Breast epithelium (tissue), 4 donors: ENCODE measurements at regions of chr1 and their contacts with region 1.

Region 1: DNA sequence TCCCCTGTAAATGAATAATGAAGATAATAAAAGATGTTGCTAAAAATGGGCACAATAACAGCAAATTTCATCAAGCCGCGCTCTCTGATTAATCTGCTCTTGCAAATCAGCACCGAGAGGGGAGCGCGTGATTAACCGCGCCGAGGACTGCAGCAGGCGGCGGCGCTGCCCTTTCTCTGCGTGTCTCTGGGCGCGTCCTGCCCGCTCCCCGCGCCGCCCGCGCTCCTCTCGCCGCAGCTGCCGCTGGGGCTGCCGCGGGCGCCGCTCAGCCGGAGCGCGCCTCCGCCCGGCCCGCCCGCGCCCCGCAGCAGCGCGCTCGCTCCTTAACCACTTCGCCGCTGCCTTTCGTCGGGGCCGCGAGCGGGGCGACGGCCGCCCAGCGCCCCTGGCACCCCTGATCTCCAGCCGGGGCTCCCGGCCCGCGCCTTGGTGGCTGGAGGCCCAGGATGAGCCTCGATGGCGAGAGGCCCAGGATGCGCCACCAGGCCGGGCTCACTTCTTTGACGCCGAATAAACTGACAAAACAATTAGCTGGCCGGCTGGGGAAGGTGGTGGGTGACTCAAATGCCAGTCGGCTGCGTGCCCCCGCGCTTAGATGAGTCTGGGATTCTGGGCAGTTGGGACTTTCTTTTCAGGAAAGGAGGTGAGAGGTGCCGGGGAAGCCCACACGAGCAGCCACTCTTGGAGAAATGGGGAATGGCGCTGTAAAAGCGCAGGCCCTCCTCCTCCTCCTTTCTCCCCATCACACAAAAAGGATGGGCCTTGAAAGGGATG is 221.4 kb upstream of the PKN2 start:
- DNase-seq: no peak
- H3K4me3 ChIP-seq: peak overlapping the region; percentile 43 to 60 (median 50)
- H3K27ac ChIP-seq: no peak overlapping the region
- H3K4me1 ChIP-seq: no peaks in the 10 kb centered on the region
- H3K27me3 ChIP-seq: no peaks in the 10 kb centered on the region
- CTCF ChIP-seq: no peak
- POLR2A ChIP-seq: no peak

Region 2: GRCh38 chr1:88168126-88168525 is 294.5 kb before region 1 on chr1:
- intact Hi-C with region 1: loop called (anchors 10 kb)
- DNase-seq: no peak
- H3K4me3 ChIP-seq: no peak overlapping the region
- H3K27ac ChIP-seq: no peak overlapping the region
- H3K4me1 ChIP-seq: no peaks in the 10 kb centered on the region
- H3K27me3 ChIP-seq: peaks cover 0 to 5% of the 10 kb centered on the region in 2 donors
- CTCF ChIP-seq: no peak
- POLR2A ChIP-seq: no peak

Region 3: DNA sequence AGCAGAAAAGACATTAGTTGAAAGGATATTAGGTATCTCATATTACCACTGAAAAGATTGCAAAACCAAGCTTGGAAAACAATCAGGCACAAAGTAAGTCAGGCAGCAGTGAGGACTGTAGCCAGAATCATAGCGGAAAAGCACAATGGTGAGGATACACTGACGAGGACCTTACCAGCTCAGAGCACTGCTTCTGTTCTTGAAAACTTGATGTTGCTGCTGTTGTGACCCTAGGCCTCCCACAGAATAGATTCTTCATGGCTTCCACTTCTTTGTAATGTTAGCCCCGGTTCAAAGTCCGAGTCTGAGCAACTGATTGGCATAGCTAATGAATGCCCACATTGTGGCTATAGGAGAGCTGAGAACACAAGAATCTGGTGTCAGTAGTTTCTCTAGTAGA is 1125.1 kb after region 1 on chr1:
- intact Hi-C with region 1: no loop called
- DNase-seq: no peak
- H3K4me3 ChIP-seq: no peak overlapping the region
- H3K27ac ChIP-seq: no peak overlapping the region
- H3K4me1 ChIP-seq: no peaks in the 10 kb centered on the region
- H3K27me3 ChIP-seq: no peaks in the 10 kb centered on the region
- CTCF ChIP-seq: no peak
- POLR2A ChIP-seq: no peak